ENCODE measurements at regions of chr16 and their contacts with region 1.

Region 1: DNA sequence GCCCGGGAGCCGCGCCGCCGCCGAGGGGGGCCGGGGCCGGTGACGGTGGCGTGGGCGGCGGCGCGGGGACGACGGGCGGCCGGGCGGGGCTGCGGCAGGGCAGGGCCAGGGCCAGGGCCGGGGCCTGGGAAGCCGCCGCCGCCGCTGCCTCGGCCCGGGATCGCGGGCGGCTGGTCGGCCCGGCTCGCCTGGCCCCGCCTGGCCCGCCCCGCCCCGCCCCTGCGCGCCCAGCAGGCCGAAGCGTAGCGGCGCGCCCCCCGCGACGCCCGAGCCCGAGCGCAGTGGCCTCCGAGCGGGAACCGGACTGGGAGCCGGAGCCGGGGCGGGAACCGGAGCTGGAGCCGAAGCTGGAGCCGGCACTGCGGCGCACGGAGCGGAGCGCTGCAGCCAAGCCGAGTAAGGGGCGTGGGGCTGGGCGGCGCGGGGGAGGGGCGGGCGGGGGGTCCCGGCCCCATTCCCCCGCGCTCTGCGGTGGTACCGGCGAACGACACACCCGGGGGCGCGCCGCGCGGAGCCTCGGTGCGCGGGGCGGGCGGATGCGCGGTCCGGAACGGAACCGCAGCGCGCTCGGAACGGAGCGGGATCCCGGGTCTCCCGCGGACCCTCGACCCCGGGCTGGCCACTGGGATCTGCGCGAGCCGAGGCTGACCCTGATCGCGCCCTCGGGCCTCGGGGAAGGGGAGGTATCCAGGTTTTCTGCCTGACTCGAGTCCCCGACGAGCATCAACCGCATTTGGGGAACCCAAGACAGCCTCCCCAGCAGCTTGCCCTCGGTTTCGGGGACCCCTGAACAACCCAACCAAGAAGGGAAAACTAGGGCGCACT is at the start of gene BEAN1:
- DNase-seq: peak in 1 of 2 experiments; percentile 66
- H3K4me3 ChIP-seq: peak within 1 kb of the TSS; percentile 42 to 65 (median 45)
- H3K27ac ChIP-seq: no peak within 1 kb of the TSS
- H3K4me1 ChIP-seq: peaks cover 0 to 29% (median 21%) of the 10 kb centered on the region in 4 experiments; a peak in 6 of 7 replicates
- H3K27me3 ChIP-seq: peaks cover 49 to 67% (median 59%) of the 10 kb centered on the region in 4 experiments
- CTCF ChIP-seq: no peak
- EP300 ChIP-seq: no peak
- POLR2A ChIP-seq: no peak
- RAD21 ChIP-seq: no peak
- total RNA-seq, gene BEAN1: not detected in 2 replicates

Region 2: DNA sequence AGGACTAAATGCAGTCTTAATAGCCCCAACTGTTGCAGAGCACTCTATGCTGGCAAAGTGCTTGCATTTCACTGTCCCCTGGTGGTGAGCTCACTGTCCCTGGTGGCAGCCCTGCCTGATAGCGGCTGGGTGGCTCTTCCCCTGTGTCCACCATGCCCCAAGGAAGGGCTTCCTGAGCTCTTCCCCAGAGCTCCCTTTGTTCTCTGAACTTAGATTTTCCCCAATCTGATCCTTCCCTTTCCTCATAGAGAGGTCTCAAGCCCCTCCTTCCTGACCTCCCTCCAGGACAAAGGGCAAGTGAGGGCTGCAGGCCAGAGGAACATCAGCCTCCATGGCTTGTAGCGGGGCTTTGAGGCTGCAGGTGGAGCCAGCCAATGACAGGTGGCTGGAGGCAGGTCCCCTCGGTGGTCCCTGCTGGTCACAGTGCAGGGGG is 16.8 kb after region 1 on chr16:
- CTCF ChIA-PET with region 1: interaction called, 16 read pairs
- POLR2A ChIA-PET with region 1: interaction called, 4 read pairs
- DNase-seq: no peak
- H3K4me3 ChIP-seq: no peak overlapping the region
- H3K27ac ChIP-seq: no peak overlapping the region
- H3K4me1 ChIP-seq: peaks cover 0 to 4% (median 0%) of the 10 kb centered on the region in 4 experiments; a peak in 1 of 7 replicates
- H3K27me3 ChIP-seq: peaks cover 0 to 3% (median 0%) of the 10 kb centered on the region in 4 experiments; a peak in 1 of 7 replicates
- CTCF ChIP-seq: peak in 2 of 3 experiments; percentile 21 to 45; a peak in 3 of 4 replicates
- EP300 ChIP-seq: no peak
- POLR2A ChIP-seq: no peak
- RAD21 ChIP-seq: no peak; a peak in 1 of 4 replicates